ENCODE measurements at regions of chr17 and their contacts with region 1.

Region 1: GRCh38 chr17:74424657-74425056 is 7.2 kb upstream of the GPRC5C start:
- DNase-seq: no peak
- ATAC-seq: no peak
- H3K4me3 Mint-ChIP-seq: no peak overlapping the region
- H3K27ac Mint-ChIP-seq: no peak overlapping the region
- H3K4me1 Mint-ChIP-seq: no peaks in the 10 kb centered on the region
- H3K27me3 Mint-ChIP-seq: peaks cover 5% of the 10 kb centered on the region
- CTCF ChIP-seq: no peak

Region 2: GRCh38 chr17:74437702-74438101 is 13.0 kb after region 1 on chr17:
- CTCF ChIA-PET with region 1: interaction called, 10 read pairs
- POLR2A ChIA-PET with region 1: no interaction called
- intact Hi-C with region 1: no loop called
- DNase-seq: peak; percentile 23
- ATAC-seq: no peak
- H3K4me3 Mint-ChIP-seq: no peak overlapping the region
- H3K27ac Mint-ChIP-seq: no peak overlapping the region
- H3K4me1 Mint-ChIP-seq: peaks cover 2% of the 10 kb centered on the region
- H3K27me3 Mint-ChIP-seq: peaks cover 16% of the 10 kb centered on the region
- CTCF ChIP-seq: peak; percentile 85